CD14-positive monocyte (primary cell): ENCODE measurements at regions of chr7 and their contacts with region 1.

Region 1: GRCh38 chr7:100394077-100394476 is 20.8 kb downstream of the PILRA start:
- DNase-seq: no peak
- H3K4me3 ChIP-seq: no peak overlapping the region
- H3K4me3 Mint-ChIP-seq: no peak overlapping the region
- H3K27ac ChIP-seq: peak overlapping the region; percentile 46 to 60
- H3K27ac Mint-ChIP-seq: peak overlapping the region; percentile 36 to 89 (median 82)
- H3K4me1 ChIP-seq: peaks cover 60 to 79% of the 10 kb centered on the region in 2 donors
- H3K4me1 Mint-ChIP-seq: peaks cover 76% of the 10 kb centered on the region
- H3K27me3 ChIP-seq: no peaks in the 10 kb centered on the region
- H3K27me3 Mint-ChIP-seq: peaks cover 0 to 5% (median 3%) of the 10 kb centered on the region in 3 donors
- CTCF ChIP-seq: no peak

Region 2: DNA sequence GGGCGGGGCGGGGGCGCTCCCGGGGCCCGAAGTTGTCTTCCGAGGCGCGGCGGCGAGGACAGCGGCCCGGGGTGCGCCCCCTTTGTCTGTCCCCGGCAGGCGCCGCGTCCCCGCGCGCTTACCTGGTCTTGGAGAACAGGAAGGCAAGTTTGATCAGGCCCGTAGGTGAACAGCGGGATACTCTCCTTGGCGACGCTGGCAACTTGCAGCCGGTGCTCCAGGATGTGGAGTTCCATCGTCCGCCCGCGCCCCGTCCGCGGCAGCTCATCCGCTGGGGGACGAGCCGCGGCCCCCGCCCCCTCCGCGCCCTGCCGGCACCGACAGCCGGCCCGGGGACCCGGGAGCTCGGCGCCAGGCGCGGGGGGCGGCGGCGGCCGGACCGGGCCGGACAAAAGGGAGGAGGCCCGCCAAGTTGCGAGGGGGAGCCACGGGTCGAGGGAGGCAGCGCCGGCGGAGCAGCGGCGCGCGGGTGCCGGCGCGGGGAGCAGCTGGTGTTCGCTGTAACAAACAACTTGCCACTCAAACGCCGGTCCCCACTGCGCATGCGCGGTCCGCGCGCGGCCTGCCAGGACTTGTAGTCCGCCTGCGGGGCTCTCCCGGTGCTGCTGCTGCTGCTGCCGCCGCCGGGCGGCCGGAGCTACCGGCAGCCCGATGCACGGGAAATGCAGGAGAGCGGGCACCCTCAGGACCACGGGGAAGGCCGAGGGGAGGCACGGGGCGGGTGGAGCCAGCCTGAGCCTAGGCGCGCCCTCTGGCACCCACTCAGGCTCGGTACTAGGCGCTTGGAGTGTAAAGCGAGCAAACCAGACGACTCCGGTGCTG is 122.2 kb before region 1 on chr7:
- intact Hi-C with region 1: no loop called
- DNase-seq: peak; percentile 93 to 97 (median 94)
- H3K4me3 ChIP-seq: peak overlapping the region; percentile 38 to 71 (median 57)
- H3K4me3 Mint-ChIP-seq: peak overlapping the region; percentile 75 to 82
- H3K27ac ChIP-seq: no peak overlapping the region
- H3K27ac Mint-ChIP-seq: peak overlapping the region in 1 of 7 donors; percentile 53
- H3K4me1 ChIP-seq: peaks cover 12 to 16% of the 10 kb centered on the region in 2 donors
- H3K4me1 Mint-ChIP-seq: peaks cover 25% of the 10 kb centered on the region
- H3K27me3 ChIP-seq: peaks cover 2 to 8% of the 10 kb centered on the region in 2 donors
- H3K27me3 Mint-ChIP-seq: peaks cover 13 to 25% (median 19%) of the 10 kb centered on the region in 3 donors
- CTCF ChIP-seq: no peak

Region 3: GRCh38 chr7:100353685-100354330 is 40.3 kb before region 1 on chr7:
- intact Hi-C with region 1: no loop called
- DNase-seq: no peak
- H3K4me3 ChIP-seq: no peak overlapping the region
- H3K4me3 Mint-ChIP-seq: peak overlapping the region in 1 of 2 donors; percentile 24
- H3K27ac ChIP-seq: peak overlapping the region in 1 of 2 donors; percentile 22
- H3K27ac Mint-ChIP-seq: peak overlapping the region in 4 of 7 donors; percentile 37 to 68 (median 57)
- H3K4me1 ChIP-seq: peaks cover 6 to 9% of the 10 kb centered on the region in 2 donors
- H3K4me1 Mint-ChIP-seq: peaks cover 11% of the 10 kb centered on the region
- H3K27me3 ChIP-seq: no peaks in the 10 kb centered on the region
- H3K27me3 Mint-ChIP-seq: peaks cover 0 to 2% (median 1%) of the 10 kb centered on the region in 3 donors
- CTCF ChIP-seq: no peak

Region 4: GRCh38 chr7:100380196-100380595 is 13.9 kb before region 1 on chr7:
- intact Hi-C with region 1: loop called in 1 of 2 experiments (anchors 2 kb)
- DNase-seq: peak; percentile 35 to 72 (median 57)
- H3K4me3 ChIP-seq: peak overlapping the region in 2 of 3 experiments; percentile 18 to 56
- H3K4me3 Mint-ChIP-seq: peak overlapping the region; percentile 59 to 77
- H3K27ac ChIP-seq: peak overlapping the region; percentile 78 to 79
- H3K27ac Mint-ChIP-seq: peak overlapping the region; percentile 83 to 97 (median 93)
- H3K4me1 ChIP-seq: peaks cover 96 to 100% of the 10 kb centered on the region in 2 donors
- H3K4me1 Mint-ChIP-seq: peaks cover 83% of the 10 kb centered on the region
- H3K27me3 ChIP-seq: no peaks in the 10 kb centered on the region
- H3K27me3 Mint-ChIP-seq: peaks cover 0 to 8% (median 2%) of the 10 kb centered on the region in 3 donors
- CTCF ChIP-seq: no peak